ENCODE measurements at regions of chr5 and their contacts with region 1.

Region 1: GRCh38 chr5:154754460-154755360 is 467 bp upstream of the LARP1 start:
- DNase-seq: peak; percentile 99 to 100 (median 99)
- ATAC-seq: peak; percentile 89
- H3K4me3 ChIP-seq: peak overlapping the region; percentile 79 to 86
- H3K4me3 Mint-ChIP-seq: peak overlapping the region; percentile 89
- H3K27ac ChIP-seq: peak overlapping the region; percentile 82 to 94
- H3K27ac Mint-ChIP-seq: peak overlapping the region; percentile 97
- H3K4me1 ChIP-seq: peaks cover 32% of the 10 kb centered on the region
- H3K4me1 Mint-ChIP-seq: peaks cover 41% of the 10 kb centered on the region
- H3K27me3 ChIP-seq: no peaks in the 10 kb centered on the region
- H3K27me3 Mint-ChIP-seq: no peaks in the 10 kb centered on the region
- CTCF ChIP-seq: peak; percentile 20

Region 2: GRCh38 chr5:154189819-154190594 is 564.7 kb before region 1 on chr5:
- CTCF ChIA-PET with region 1: no interaction called
- POLR2A ChIA-PET with region 1: no interaction called
- intact Hi-C with region 1: loop called (anchors 5 to 10 kb)
- DNase-seq: peak; percentile 65 to 93 (median 82)
- ATAC-seq: peak; percentile 81
- H3K4me3 ChIP-seq: peak overlapping the region; percentile 86 to 89
- H3K4me3 Mint-ChIP-seq: peak overlapping the region; percentile 82
- H3K27ac ChIP-seq: peak overlapping the region; percentile 60 to 72
- H3K27ac Mint-ChIP-seq: peak overlapping the region; percentile 81
- H3K4me1 ChIP-seq: peaks cover 26% of the 10 kb centered on the region
- H3K4me1 Mint-ChIP-seq: peaks cover 36% of the 10 kb centered on the region
- H3K27me3 ChIP-seq: no peaks in the 10 kb centered on the region
- H3K27me3 Mint-ChIP-seq: no peaks in the 10 kb centered on the region
- CTCF ChIP-seq: peak; percentile 57

Region 3: GRCh38 chr5:154647114-154647760 is 107.5 kb before region 1 on chr5:
- CTCF ChIA-PET with region 1: interaction called, 10 read pairs
- POLR2A ChIA-PET with region 1: no interaction called
- intact Hi-C with region 1: loop called (anchors 1 to 5 kb)
- DNase-seq: peak in 8 of 9 experiments; percentile 9 to 70 (median 39)
- ATAC-seq: peak; percentile 68
- H3K4me3 ChIP-seq: peak overlapping the region; percentile 53 to 75
- H3K4me3 Mint-ChIP-seq: peak overlapping the region; percentile 89
- H3K27ac ChIP-seq: peak overlapping the region in 1 of 2 experiments; percentile 1
- H3K27ac Mint-ChIP-seq: peak overlapping the region; percentile 66
- H3K4me1 ChIP-seq: peaks cover 6% of the 10 kb centered on the region
- H3K4me1 Mint-ChIP-seq: peaks cover 15% of the 10 kb centered on the region
- H3K27me3 ChIP-seq: no peaks in the 10 kb centered on the region
- H3K27me3 Mint-ChIP-seq: no peaks in the 10 kb centered on the region
- CTCF ChIP-seq: no peak

Region 4: DNA sequence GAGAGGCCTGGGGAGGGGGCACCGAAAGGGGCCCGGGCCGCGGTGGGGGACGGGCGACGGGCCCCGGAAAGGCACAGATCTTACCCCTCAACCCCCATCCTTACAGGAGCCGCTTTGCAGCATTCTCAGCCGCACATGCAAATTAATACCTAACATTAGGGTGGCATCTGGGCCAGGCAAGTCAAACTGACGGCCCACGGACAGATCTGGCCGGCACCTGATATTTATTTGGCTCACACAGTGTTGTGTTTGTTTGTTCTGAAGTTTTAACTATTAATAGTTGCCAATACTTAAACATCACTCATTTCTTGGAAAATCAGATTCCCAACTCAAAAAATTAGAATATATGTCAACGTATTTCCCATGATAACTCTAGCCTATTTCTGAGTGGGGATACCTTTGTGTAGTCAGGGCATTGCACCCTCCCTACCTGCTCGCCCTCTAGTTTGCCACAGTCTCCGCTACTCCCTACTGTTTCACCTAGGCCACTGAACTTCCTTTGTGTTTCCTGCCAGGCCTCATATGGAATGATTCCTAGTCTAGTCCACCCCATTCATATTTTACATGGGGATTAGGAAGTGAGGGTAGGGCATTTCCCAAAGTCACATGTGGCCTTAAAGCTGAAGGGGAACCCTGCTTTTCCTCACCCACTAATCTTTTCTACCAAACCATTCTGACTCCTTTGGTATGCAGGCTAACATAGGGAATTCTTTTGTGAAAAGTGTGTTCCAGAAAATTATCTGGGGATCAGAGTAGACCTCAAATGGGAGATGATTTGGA is 71.4 kb before region 1 on chr5:
- CTCF ChIA-PET with region 1: no interaction called
- POLR2A ChIA-PET with region 1: no interaction called
- intact Hi-C with region 1: loop called (anchors 1 to 5 kb)
- DNase-seq: no peak
- ATAC-seq: no peak
- H3K4me3 ChIP-seq: peak overlapping the region; percentile 54 to 58
- H3K4me3 Mint-ChIP-seq: peak overlapping the region; percentile 58
- H3K27ac ChIP-seq: no peak overlapping the region
- H3K27ac Mint-ChIP-seq: no peak overlapping the region
- H3K4me1 ChIP-seq: no peaks in the 10 kb centered on the region
- H3K4me1 Mint-ChIP-seq: peaks cover 7% of the 10 kb centered on the region
- H3K27me3 ChIP-seq: no peaks in the 10 kb centered on the region
- H3K27me3 Mint-ChIP-seq: peaks cover 5% of the 10 kb centered on the region
- CTCF ChIP-seq: no peak

Region 5: GRCh38 chr5:154786414-154786813 is 31.7 kb after region 1 on chr5:
- CTCF ChIA-PET with region 1: no interaction called
- POLR2A ChIA-PET with region 1: no interaction called
- intact Hi-C with region 1: loop called in 1 of 2 experiments (anchors 2 kb)
- DNase-seq: no peak
- ATAC-seq: no peak
- H3K4me3 ChIP-seq: no peak overlapping the region
- H3K4me3 Mint-ChIP-seq: no peak overlapping the region
- H3K27ac ChIP-seq: no peak overlapping the region
- H3K27ac Mint-ChIP-seq: peak overlapping the region; percentile 83
- H3K4me1 ChIP-seq: peaks cover 63% of the 10 kb centered on the region
- H3K4me1 Mint-ChIP-seq: peaks cover 70% of the 10 kb centered on the region
- H3K27me3 ChIP-seq: no peaks in the 10 kb centered on the region
- H3K27me3 Mint-ChIP-seq: no peaks in the 10 kb centered on the region
- CTCF ChIP-seq: no peak

Region 6: DNA sequence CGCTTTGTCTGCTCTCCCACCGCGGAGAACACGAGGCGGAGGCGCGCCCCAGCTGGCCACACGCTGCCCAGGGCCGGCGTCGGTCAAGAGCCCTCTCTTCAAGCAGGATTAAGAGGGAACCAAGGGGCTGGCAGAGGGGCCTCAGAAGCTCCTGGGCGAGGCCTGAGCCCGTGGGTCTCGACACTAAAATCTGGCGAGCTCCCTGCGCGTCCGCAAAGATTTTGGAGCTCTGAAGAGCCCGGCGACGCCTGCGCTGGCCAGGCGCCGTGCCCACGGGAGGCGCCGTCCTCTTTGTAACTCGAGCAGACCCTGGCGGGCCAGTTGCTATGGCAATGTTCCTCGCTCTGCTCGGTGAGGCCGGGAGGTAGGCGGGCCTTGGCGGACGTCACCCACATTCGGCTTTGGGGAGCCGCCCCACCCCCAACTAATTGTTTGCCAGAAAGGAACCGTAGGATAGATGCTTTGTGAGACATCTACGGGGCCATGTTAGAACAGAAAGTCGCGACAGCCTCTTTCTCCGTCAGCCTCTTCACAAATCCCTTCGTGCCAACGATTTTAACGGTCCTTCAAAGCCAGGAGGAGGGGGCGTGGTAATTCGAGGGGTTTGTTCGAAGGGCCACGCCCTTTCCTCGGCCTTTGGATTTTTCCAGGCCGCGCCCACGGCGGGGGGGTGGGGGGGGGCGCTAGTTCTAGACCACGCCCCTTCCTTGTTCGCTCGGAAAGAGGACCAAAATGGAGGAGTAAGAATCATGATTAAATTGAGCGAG is 103.0 kb after region 1 on chr5:
- CTCF ChIA-PET with region 1: no interaction called
- POLR2A ChIA-PET with region 1: interaction called, 3 read pairs
- intact Hi-C with region 1: loop called (anchors 1 kb)
- DNase-seq: peak; percentile 76 to 95 (median 88)
- ATAC-seq: peak; percentile 48
- H3K4me3 ChIP-seq: peak overlapping the region; percentile 64 to 76
- H3K4me3 Mint-ChIP-seq: peak overlapping the region; percentile 86
- H3K27ac ChIP-seq: peak overlapping the region; percentile 90 to 97
- H3K27ac Mint-ChIP-seq: peak overlapping the region; percentile 94
- H3K4me1 ChIP-seq: peaks cover 31% of the 10 kb centered on the region
- H3K4me1 Mint-ChIP-seq: peaks cover 39% of the 10 kb centered on the region
- H3K27me3 ChIP-seq: no peaks in the 10 kb centered on the region
- H3K27me3 Mint-ChIP-seq: no peaks in the 10 kb centered on the region
- CTCF ChIP-seq: no peak

Measured in CD8-positive, alpha-beta T cell (primary cell).